ENCODE measurements at regions of chr17 and their contacts with region 1.

Region 1: DNA sequence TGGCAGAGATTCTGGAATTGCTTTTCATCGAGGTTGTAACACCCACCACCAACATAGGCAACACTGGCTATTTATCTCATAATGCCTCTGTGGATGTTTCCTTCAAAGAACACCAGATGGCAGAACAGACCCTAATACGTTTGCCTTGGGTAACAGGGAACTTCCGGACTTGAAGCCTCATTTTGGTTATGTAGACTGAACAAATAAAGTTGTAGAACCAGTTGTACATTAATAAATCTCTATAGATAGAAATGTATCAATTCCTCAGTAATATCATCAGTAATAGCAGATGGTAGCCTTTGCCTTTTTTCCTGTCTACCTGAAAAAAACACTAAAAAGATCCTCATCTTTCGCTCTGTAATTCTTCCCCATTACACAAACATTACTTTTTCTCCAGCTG is 25.9 kb upstream of the APOH start:
- DNase-seq: peak; percentile 34 to 79
- H3K4me3 ChIP-seq: no peak overlapping the region
- H3K27ac ChIP-seq: no peak overlapping the region
- H3K4me1 ChIP-seq: peaks cover 10% of the 10 kb centered on the region
- H3K27me3 ChIP-seq: no peaks in the 10 kb centered on the region
- CTCF ChIP-seq: peak; percentile 86

Region 2: DNA sequence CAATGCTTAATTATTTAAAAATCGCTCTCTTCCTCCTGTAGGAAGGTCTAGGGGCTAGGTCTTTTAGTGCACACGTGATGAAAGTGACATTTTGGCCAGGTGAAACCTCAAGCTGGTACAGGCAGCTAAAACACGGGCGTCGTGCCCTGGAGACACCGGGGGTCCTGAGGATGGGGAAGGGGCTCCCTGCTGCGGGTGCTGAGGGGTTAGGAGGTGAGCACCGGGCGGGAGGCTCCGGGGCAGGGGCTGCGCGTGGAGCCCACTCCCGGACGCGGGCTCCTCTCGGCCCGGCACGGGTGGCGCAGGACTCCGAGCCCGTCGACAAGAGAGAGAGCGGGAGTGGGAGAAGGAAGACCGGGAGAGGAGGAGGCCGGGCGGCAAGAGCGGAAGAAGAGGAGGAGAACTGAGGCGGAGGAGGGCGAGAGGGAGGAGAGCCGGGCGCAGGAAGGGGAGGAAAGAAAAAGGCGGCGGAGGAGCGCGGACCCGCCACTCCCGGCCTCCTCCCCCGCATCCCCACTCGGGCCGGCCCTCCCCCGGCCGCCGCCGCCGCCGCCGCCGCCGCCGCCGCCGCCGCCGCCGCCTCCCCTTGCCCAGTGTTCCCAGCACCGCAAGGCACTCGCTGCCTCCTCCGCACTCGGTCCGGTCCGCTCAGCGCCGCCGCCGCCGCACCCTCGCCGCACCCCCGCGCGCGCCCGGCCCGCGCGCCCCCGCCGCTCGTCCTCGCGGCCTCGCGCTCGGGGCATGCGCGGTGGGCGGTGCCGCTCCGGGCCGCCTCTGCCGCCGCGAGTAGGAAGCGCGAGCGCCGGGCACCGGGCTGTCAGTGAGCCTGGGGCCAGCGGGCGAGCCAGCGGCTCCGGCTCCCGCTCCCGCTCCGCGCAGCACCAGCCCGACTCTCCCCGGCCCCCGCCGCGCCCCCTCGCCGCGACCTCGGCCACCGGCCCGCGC is 47.0 kb after region 1 on chr17 and contains the start of gene PRKCA:
- CTCF ChIA-PET with region 1: no interaction called
- POLR2A ChIA-PET with region 1: no interaction called
- intact Hi-C with region 1: loop called (anchors 2 kb)
- DNase-seq: peak in 1 of 2 experiments; percentile 83
- H3K4me3 ChIP-seq: peak within 1 kb of the TSS; percentile 96
- H3K27ac ChIP-seq: peak within 1 kb of the TSS; percentile 56
- H3K4me1 ChIP-seq: peaks cover 30% of the 10 kb centered on the region
- H3K27me3 ChIP-seq: no peaks in the 10 kb centered on the region
- CTCF ChIP-seq: no peak
- total RNA-seq, gene PRKCA: 23.1 and 23.8 TPM in 2 replicates

Region 3: GRCh38 chr17:66339561-66339960 is 84.4 kb after region 1 on chr17:
- CTCF ChIA-PET with region 1: no interaction called
- POLR2A ChIA-PET with region 1: no interaction called
- intact Hi-C with region 1: no loop called
- DNase-seq: no peak
- H3K4me3 ChIP-seq: no peak overlapping the region
- H3K27ac ChIP-seq: no peak overlapping the region
- H3K4me1 ChIP-seq: peaks cover 18% of the 10 kb centered on the region
- H3K27me3 ChIP-seq: no peaks in the 10 kb centered on the region
- CTCF ChIP-seq: no peak

Region 4: GRCh38 chr17:66353937-66354401 is 98.9 kb after region 1 on chr17:
- CTCF ChIA-PET with region 1: no interaction called
- POLR2A ChIA-PET with region 1: no interaction called
- intact Hi-C with region 1: loop called (anchors 2 kb)
- DNase-seq: no peak
- H3K4me3 ChIP-seq: no peak overlapping the region
- H3K27ac ChIP-seq: no peak overlapping the region
- H3K4me1 ChIP-seq: peaks cover 7% of the 10 kb centered on the region
- H3K27me3 ChIP-seq: no peaks in the 10 kb centered on the region
- CTCF ChIP-seq: no peak

Region 5: DNA sequence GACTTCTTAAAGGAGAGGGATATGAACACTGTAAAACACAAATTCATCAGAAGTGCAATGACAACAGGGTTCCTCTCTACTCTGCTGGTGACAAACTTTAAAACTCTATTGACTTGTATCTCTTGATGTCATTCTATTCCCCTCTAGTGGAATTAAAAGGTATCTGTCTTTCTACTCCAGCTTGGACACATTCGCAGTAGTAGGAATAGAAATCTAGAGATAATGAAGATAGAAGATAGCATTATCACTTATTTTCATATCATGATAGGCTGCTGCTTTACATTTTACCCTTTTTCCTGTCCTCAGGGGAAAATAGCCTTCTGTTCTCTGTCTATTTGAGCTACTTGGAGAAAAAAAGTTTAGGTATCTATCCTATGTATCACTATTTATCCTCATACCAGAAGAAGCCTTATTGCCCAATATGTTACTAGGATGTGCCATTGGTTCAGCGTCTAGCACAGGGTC is 370.2 kb after region 1 on chr17:
- CTCF ChIA-PET with region 1: no interaction called
- POLR2A ChIA-PET with region 1: no interaction called
- intact Hi-C with region 1: loop called (anchors 1 kb)
- DNase-seq: no peak
- H3K4me3 ChIP-seq: no peak overlapping the region
- H3K27ac ChIP-seq: no peak overlapping the region
- H3K4me1 ChIP-seq: no peaks in the 10 kb centered on the region
- H3K27me3 ChIP-seq: no peaks in the 10 kb centered on the region
- CTCF ChIP-seq: peak; percentile 74